Activated CD8-positive, alpha-beta memory T cell treated with anti-CD3 and anti-CD28 coated beads, Interleukin-2, amount 10 ng/mL, durations not matched to agents 7 days and 5 days (primary cell): ENCODE measurements at regions of chr3 and their contacts with region 1.

Region 1: GRCh38 chr3:170055209-170055608 is 17.4 kb downstream of the GPR160 start:
- DNase-seq: peak; percentile 48
- ATAC-seq: peak; percentile 55
- H3K4me3 Mint-ChIP-seq: no peak overlapping the region
- H3K27ac Mint-ChIP-seq: peak overlapping the region; percentile 33
- H3K4me1 Mint-ChIP-seq: peaks cover 51% of the 10 kb centered on the region
- H3K27me3 Mint-ChIP-seq: no peaks in the 10 kb centered on the region

Region 2: GRCh38 chr3:169863458-169863899 is 191.7 kb before region 1 on chr3:
- CTCF ChIA-PET with region 1: interaction called, 14 read pairs
- DNase-seq: peak; percentile 72
- ATAC-seq: peak; percentile 67
- H3K4me3 Mint-ChIP-seq: no peak overlapping the region
- H3K27ac Mint-ChIP-seq: no peak overlapping the region
- H3K4me1 Mint-ChIP-seq: peaks cover 19% of the 10 kb centered on the region
- H3K27me3 Mint-ChIP-seq: peaks cover 22% of the 10 kb centered on the region

Region 3: DNA sequence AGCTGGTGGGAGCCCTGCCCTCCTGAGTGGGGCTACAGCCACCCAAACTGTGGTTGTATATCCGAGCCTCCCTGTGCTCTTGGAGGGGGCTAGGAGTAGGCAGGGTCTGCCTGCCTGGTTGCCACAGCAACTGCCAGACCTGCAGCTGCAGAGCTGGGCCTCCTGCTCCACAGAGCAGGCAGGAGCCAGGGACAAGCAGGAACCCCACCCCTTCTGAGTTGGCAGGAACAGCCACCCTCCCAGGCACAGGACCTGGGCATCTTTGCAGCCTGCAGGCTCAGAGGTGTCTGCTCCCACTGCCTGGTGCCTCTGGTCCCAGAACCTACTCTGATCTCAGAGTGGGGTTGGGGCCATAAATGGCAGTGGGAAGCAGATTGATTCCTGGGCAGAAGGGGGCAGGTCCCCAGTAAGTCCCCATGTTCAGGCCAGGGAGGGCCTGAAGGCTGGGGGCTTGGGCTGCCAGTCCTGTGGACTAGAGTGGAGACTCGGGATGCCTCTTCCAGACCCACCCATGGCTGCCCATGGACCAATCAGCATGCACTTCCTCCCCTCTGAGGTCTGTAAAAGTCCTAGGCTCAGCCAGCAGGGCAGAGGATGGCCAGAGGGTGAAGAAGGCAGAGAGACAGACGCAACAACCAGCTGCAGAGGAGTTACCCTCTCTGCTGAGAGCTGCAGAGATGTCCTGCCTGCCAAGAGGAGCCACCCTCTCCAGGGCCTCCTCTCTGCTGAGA is 175.2 kb before region 1 on chr3:
- CTCF ChIA-PET with region 1: no interaction called
- DNase-seq: no peak
- ATAC-seq: no peak
- H3K4me3 Mint-ChIP-seq: no peak overlapping the region
- H3K27ac Mint-ChIP-seq: no peak overlapping the region
- H3K4me1 Mint-ChIP-seq: peaks cover 3% of the 10 kb centered on the region
- H3K27me3 Mint-ChIP-seq: no peaks in the 10 kb centered on the region

Region 4: DNA sequence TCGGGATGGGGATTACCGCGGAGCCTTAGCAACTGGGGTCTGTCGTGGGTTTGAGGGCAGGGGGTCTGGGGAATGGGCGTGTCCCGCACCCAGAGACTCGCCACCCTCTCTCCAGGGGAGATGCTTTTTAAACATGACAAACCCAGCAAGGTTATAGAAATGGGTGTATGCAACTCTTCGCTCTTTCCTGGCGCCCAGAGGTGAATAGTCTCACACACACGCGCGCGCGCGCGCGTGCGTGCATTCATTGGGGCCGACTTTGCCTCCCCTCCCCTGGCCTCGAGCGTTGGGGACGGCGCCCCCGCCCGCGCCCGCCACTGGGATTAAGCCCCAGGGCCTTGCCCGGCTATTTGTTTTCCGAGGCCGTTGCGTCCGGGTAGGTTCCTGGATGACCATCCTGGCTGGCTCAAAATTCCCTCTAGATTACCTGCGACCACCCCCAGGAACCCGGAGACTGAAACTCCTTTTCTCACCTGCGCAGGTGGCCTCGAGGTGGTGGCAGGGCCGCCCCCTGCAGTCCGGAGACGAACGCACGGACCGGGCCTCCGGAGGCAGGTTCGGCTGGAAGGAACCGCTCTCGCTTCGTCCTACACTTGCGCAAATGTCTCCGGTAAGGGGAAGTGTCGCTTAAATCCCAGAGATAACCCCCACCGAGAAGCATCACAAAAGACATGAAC is 16.6 kb before region 1 on chr3:
- CTCF ChIA-PET with region 1: interaction called, 19 read pairs
- DNase-seq: no peak
- ATAC-seq: no peak
- H3K4me3 Mint-ChIP-seq: peak overlapping the region; percentile 81
- H3K27ac Mint-ChIP-seq: no peak overlapping the region
- H3K4me1 Mint-ChIP-seq: peaks cover 27% of the 10 kb centered on the region
- H3K27me3 Mint-ChIP-seq: no peaks in the 10 kb centered on the region

Region 5: DNA sequence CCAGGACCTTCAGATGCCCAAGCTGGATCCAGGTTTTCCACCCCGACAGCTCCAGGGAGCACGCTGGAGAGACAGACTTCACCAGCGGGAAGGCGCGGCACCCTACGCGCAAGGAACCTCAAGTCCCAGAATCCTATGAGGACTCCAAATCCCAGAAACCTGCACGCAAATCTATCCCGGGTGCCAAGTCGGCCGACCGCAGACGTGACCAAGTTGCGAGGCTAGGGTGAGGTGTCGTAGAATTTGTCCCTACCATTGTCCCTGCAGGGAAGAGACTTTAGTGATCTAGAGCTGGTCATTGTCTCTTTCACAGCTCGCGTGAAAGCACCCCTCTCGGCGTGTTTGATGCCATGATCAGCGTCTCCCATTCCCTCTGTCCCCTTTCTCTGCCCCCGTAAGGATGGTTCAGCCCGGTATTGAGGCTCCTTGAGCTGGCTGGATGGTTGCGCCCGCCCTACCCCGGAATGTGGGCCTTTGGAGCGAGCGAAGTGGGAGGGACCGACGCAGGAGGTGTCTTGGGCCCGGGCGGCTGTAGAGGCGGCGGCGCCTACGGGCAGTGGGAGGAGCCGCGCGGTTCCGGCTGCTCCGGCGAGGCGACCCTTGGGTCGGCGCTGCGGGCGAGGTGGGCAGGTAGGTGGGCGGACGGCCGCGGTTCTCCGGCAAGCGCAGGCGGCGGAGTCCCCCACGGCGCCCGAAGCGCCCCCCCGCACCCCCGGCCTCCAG is 166.9 kb after region 1 on chr3 and contains the start of gene PRKCI:
- CTCF ChIA-PET with region 1: no interaction called
- DNase-seq: peak; percentile 93
- ATAC-seq: peak; percentile 98
- H3K4me3 Mint-ChIP-seq: peak within 1 kb of the TSS; percentile 80
- H3K27ac Mint-ChIP-seq: peak within 1 kb of the TSS; percentile 90
- H3K4me1 Mint-ChIP-seq: peaks cover 24% of the 10 kb centered on the region
- H3K27me3 Mint-ChIP-seq: no peaks in the 10 kb centered on the region
- total RNA-seq, gene PRKCI: 13.3 to 16.4 TPM